ENCODE measurements at regions of chr22 and their contacts with region 1.

Region 1: DNA sequence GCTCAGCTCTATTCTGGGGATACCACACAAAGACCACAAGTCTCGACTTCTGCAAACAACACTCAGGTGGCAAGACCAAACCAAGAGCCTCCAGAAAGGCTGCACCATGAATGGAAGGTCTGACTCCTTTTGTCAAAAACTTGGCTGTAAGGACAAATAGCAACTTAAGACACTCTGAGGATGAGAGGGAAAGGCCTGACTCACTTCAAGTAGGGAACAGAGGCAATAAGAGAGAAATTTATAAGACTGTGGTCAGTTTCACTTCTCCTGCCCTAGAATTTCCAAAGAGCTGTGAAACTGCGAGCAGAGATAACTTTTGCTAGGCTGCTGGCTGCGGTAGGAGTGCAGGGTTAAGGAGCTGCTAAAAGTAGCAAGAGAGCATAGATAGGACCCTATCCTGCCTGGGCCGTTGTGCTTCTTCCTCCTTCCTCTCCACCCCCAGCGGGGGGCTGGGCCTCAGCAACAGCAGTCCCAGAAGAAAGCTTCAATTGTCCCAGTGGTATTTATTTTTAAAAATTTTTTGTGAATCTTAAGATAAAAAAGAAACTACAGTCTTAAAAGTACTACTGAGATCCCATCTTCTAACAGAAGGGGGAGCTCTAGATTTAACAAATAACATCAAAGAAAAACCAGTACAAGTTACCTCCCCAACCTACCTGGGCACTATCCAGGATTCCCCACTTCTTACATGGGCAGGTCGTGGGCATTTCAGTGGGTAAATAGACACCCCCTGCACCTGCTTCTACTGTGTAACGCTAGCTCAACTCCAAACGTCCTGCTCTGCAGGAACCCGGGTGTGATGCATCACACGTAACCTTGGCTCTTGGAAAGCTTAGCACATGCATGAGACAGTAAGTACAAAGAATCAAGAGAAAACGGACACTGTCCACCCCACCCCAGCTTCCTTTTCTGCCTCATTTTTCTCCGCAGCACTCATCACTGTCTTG is 66.4 kb downstream of the SGSM3 start:
- DNase-seq: peak; percentile 9
- H3K4me3 Mint-ChIP-seq: no peak overlapping the region
- H3K27ac Mint-ChIP-seq: no peak overlapping the region
- H3K4me1 Mint-ChIP-seq: peaks cover 30% of the 10 kb centered on the region
- H3K27me3 Mint-ChIP-seq: no peaks in the 10 kb centered on the region
- CTCF ChIP-seq: peak; percentile 55

Region 2: GRCh38 chr22:40487663-40488249 is 51.0 kb after region 1 on chr22:
- CTCF ChIA-PET with region 1: interaction called, 7 read pairs
- intact Hi-C with region 1: loop called (anchors 2 kb)
- DNase-seq: no peak
- H3K4me3 Mint-ChIP-seq: no peak overlapping the region
- H3K27ac Mint-ChIP-seq: no peak overlapping the region
- H3K4me1 Mint-ChIP-seq: peaks cover 16% of the 10 kb centered on the region
- H3K27me3 Mint-ChIP-seq: no peaks in the 10 kb centered on the region
- CTCF ChIP-seq: peak; percentile 60

Region 3: DNA sequence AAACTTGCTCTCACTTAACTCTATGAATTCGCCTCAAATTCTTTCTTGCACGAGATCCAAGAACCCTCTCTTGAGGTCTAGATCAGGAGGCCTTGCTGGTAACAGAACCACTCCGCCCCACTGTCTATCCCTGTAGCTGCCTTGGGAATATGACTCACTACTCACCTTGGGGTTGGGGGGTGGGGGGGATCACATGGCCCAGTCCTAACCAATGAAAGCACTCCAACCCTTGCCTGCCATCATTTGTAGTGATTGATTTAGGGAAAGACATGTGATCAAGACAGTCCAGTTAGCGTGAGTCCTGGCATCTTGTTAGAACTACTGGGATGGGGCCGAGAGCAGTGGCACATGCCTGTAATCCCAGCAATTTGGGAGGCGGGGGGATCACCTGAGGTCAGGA is 204.5 kb after region 1 on chr22:
- CTCF ChIA-PET with region 1: interaction called, 12 read pairs
- intact Hi-C with region 1: loop called (anchors 1 kb)
- DNase-seq: no peak
- H3K4me3 Mint-ChIP-seq: no peak overlapping the region
- H3K27ac Mint-ChIP-seq: no peak overlapping the region
- H3K4me1 Mint-ChIP-seq: peaks cover 26% of the 10 kb centered on the region
- H3K27me3 Mint-ChIP-seq: no peaks in the 10 kb centered on the region
- CTCF ChIP-seq: no peak

Region 4: GRCh38 chr22:40764763-40765441 is 328.1 kb after region 1 on chr22:
- CTCF ChIA-PET with region 1: interaction called, 9 read pairs
- intact Hi-C with region 1: loop called (anchors 10 kb)
- DNase-seq: no peak
- H3K4me3 Mint-ChIP-seq: no peak overlapping the region
- H3K27ac Mint-ChIP-seq: no peak overlapping the region
- H3K4me1 Mint-ChIP-seq: peaks cover 8% of the 10 kb centered on the region
- H3K27me3 Mint-ChIP-seq: no peaks in the 10 kb centered on the region
- CTCF ChIP-seq: no peak

Measured in Calu3 (cell line).